ENCODE measurements at regions of chr3 and their contacts with region 1.

Region 1: GRCh38 chr3:113002679-113003078 is 11.9 kb downstream of the GTPBP8 start:
- DNase-seq: peak in 13 of 14 experiments; percentile 20 to 74 (median 44)
- ATAC-seq: peak; percentile 47
- H3K4me3 ChIP-seq: no peak overlapping the region
- H3K4me3 Mint-ChIP-seq: peak overlapping the region; percentile 59
- H3K27ac ChIP-seq: peak overlapping the region; percentile 22 to 52
- H3K27ac Mint-ChIP-seq: peak overlapping the region; percentile 90
- H3K4me1 ChIP-seq: peaks cover 27% of the 10 kb centered on the region
- H3K4me1 Mint-ChIP-seq: peaks cover 90% of the 10 kb centered on the region
- H3K27me3 ChIP-seq: no peaks in the 10 kb centered on the region
- H3K27me3 Mint-ChIP-seq: no peaks in the 10 kb centered on the region
- CTCF ChIP-seq: no peak

Region 2: GRCh38 chr3:112973325-112974177 is 29.1 kb before region 1 on chr3:
- CTCF ChIA-PET with region 1: interaction called, 16 read pairs
- POLR2A ChIA-PET with region 1: interaction called, 4 read pairs
- intact Hi-C with region 1: loop called in 1 of 2 experiments (anchors 1 kb)
- DNase-seq: peak in 7 of 14 experiments; percentile 13 to 69 (median 50)
- ATAC-seq: peak; percentile 81
- H3K4me3 ChIP-seq: peak overlapping the region; percentile 65
- H3K4me3 Mint-ChIP-seq: peak overlapping the region; percentile 92
- H3K27ac ChIP-seq: peak overlapping the region; percentile 65 to 69
- H3K27ac Mint-ChIP-seq: peak overlapping the region; percentile 94
- H3K4me1 ChIP-seq: peaks cover 34% of the 10 kb centered on the region
- H3K4me1 Mint-ChIP-seq: peaks cover 94% of the 10 kb centered on the region
- H3K27me3 ChIP-seq: no peaks in the 10 kb centered on the region
- H3K27me3 Mint-ChIP-seq: no peaks in the 10 kb centered on the region
- CTCF ChIP-seq: no peak

Region 3: GRCh38 chr3:112979240-112979832 is 23.3 kb before region 1 on chr3:
- CTCF ChIA-PET with region 1: interaction called, 16 read pairs
- POLR2A ChIA-PET with region 1: interaction called, 4 read pairs
- intact Hi-C with region 1: no loop called
- DNase-seq: peak in 4 of 14 experiments; percentile 39 to 77 (median 72)
- ATAC-seq: no peak
- H3K4me3 ChIP-seq: no peak overlapping the region
- H3K4me3 Mint-ChIP-seq: peak overlapping the region; percentile 1
- H3K27ac ChIP-seq: no peak overlapping the region
- H3K27ac Mint-ChIP-seq: peak overlapping the region; percentile 6
- H3K4me1 ChIP-seq: peaks cover 36% of the 10 kb centered on the region
- H3K4me1 Mint-ChIP-seq: peaks cover 73% of the 10 kb centered on the region
- H3K27me3 ChIP-seq: no peaks in the 10 kb centered on the region
- H3K27me3 Mint-ChIP-seq: no peaks in the 10 kb centered on the region
- CTCF ChIP-seq: peak; percentile 94

Region 4: DNA sequence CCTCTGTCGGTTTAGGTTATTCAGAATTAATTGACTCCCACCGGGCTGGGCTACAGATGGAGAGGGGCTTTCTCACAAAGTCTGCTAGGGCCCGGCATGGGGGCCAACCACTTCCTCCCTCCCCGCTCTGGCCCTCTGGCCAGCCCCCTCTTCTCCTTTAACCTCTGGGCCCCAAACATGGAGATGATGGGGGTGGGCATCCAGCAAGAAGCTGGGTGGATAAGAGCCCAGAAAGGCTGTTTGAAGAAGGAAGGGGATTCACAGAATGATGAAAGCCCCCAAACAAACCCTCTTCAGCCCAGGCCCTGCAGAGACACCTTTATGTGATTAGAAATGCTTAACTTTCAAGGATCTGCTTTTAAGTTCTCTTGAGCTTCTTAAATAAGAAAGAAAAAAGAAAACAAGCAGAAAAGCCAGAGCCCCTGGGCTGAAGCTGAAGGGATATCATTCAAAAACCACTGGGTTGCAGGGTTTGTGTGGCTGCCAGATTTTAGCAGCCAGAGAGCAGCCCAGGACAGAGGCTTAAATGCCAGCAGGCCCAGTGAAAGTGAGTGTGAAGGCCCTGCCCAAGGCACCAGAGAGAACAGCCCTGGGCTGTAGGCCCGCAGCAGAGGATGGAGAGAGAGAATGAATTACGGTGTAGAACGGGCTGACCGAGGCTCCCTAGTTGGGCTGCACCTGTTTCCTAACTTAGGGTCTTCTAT is 102.2 kb after region 1 on chr3:
- CTCF ChIA-PET with region 1: no interaction called
- POLR2A ChIA-PET with region 1: no interaction called
- intact Hi-C with region 1: no loop called
- DNase-seq: no peak
- ATAC-seq: no peak
- H3K4me3 ChIP-seq: no peak overlapping the region
- H3K4me3 Mint-ChIP-seq: no peak overlapping the region
- H3K27ac ChIP-seq: no peak overlapping the region
- H3K27ac Mint-ChIP-seq: no peak overlapping the region
- H3K4me1 ChIP-seq: no peaks in the 10 kb centered on the region
- H3K4me1 Mint-ChIP-seq: no peaks in the 10 kb centered on the region
- H3K27me3 ChIP-seq: no peaks in the 10 kb centered on the region
- H3K27me3 Mint-ChIP-seq: no peaks in the 10 kb centered on the region
- CTCF ChIP-seq: no peak

Region 5: GRCh38 chr3:113329757-113330156 is 327.1 kb after region 1 on chr3:
- CTCF ChIA-PET with region 1: no interaction called
- POLR2A ChIA-PET with region 1: no interaction called
- intact Hi-C with region 1: no loop called
- DNase-seq: no peak
- ATAC-seq: no peak
- H3K4me3 ChIP-seq: no peak overlapping the region
- H3K4me3 Mint-ChIP-seq: no peak overlapping the region
- H3K27ac ChIP-seq: no peak overlapping the region
- H3K27ac Mint-ChIP-seq: no peak overlapping the region
- H3K4me1 ChIP-seq: no peaks in the 10 kb centered on the region
- H3K4me1 Mint-ChIP-seq: no peaks in the 10 kb centered on the region
- H3K27me3 ChIP-seq: no peaks in the 10 kb centered on the region
- H3K27me3 Mint-ChIP-seq: no peaks in the 10 kb centered on the region
- CTCF ChIP-seq: no peak

Measured in CD4-positive, alpha-beta T cell (primary cell).